ENCODE measurements at regions of chr7 and their contacts with region 1.

Region 1: GRCh38 chr7:3120513-3120912 is 76.8 kb upstream of the CARD11 start:
- DNase-seq: no peak
- ATAC-seq: no peak
- H3K4me3 ChIP-seq: no peak overlapping the region
- H3K27ac ChIP-seq: no peak overlapping the region
- H3K4me1 ChIP-seq: no peaks in the 10 kb centered on the region
- H3K27me3 ChIP-seq: peaks cover 0 to 32% (median 14%) of the 10 kb centered on the region in 7 donors
- CTCF ChIP-seq: no peak

Region 2: GRCh38 chr7:3439333-3440030 is 319.0 kb after region 1 on chr7:
- intact Hi-C with region 1: loop called in 1 of 10 experiments (anchors 5 kb)
- DNase-seq: no peak
- ATAC-seq: peak in 1 of 8 donors; percentile 84
- H3K4me3 ChIP-seq: no peak overlapping the region
- H3K27ac ChIP-seq: no peak overlapping the region
- H3K4me1 ChIP-seq: peaks cover 0 to 3% (median 0%) of the 10 kb centered on the region in 9 donors
- H3K27me3 ChIP-seq: no peaks in the 10 kb centered on the region
- CTCF ChIP-seq: no peak

Region 3: GRCh38 chr7:3754488-3755341 is 634.2 kb after region 1 on chr7:
- intact Hi-C with region 1: loop called in 1 of 10 experiments (anchors 10 kb)
- DNase-seq: peak in 1 of 2 donors; percentile 24
- ATAC-seq: peak in 7 of 8 donors; percentile 27 to 78 (median 49)
- H3K4me3 ChIP-seq: no peak overlapping the region
- H3K27ac ChIP-seq: peak overlapping the region in 1 of 10 donors; percentile 42
- H3K4me1 ChIP-seq: no peaks in the 10 kb centered on the region
- H3K27me3 ChIP-seq: no peaks in the 10 kb centered on the region
- CTCF ChIP-seq: no peak

Measured in heart right ventricle (tissue), 16 donors.